Natural killer cell (primary cell): ENCODE measurements at regions of chr9 and their contacts with region 1.

Region 1: DNA sequence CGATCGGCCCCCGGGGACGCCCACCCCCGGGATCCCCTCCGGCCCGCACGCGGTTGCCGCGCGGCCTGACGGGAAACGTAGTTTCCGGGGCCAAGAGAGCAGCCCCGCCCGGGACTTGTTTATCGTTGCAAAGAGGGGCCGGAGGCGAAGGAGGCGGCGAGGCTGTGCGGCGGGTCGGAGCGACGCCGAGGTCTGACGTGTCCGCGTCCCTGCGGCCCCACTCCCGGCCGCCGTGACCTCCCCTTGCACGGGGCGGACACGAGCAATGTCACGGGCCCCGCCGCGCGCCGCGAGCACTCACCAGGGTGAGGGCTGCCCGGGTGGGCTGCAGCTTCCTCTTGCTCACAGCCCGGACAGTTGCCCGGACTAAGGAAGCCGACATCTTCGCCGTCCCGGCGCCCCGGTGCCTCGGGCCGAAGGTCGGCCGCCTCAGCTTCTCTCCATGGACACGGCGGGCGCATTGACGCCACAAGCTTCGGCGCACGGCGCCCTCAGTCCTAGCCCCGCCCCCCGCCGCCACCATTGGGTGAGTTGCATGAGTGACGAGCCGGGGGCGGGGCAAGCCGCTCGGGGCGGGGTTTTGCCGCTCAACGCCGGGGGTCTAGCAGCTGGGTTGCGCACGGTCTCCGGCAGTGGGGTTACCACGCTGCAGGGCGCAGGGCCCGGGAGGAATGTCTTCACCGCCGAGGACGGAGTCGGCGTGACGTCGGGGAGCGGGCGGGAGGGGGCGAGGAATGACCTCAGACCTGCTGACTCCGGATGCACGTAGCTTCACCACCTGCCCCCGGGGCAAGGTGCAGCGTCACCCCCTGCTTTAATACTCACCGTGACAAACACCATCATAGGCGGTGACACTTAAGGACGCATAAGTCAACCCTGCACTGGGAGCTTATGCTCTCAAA is at the start of gene ISCA1:
- DNase-seq: peak; percentile 97 to 99
- ATAC-seq: peak; percentile 83 to 95 (median 84)
- H3K4me3 ChIP-seq: peak within 1 kb of the TSS; percentile 87
- H3K4me3 Mint-ChIP-seq: peak within 1 kb of the TSS; percentile 93
- H3K27ac ChIP-seq: peak within 1 kb of the TSS; percentile 98
- H3K27ac Mint-ChIP-seq: peak within 1 kb of the TSS; percentile 95 to 98
- H3K4me1 ChIP-seq: peaks cover 17% of the 10 kb centered on the region
- H3K4me1 Mint-ChIP-seq: peaks cover 34 to 38% of the 10 kb centered on the region in 2 donors
- H3K27me3 ChIP-seq: no peaks in the 10 kb centered on the region
- H3K27me3 Mint-ChIP-seq: no peaks in the 10 kb centered on the region
- CTCF ChIP-seq: no peak
- total RNA-seq, gene ISCA1: 57.3 to 67.6 (median 63.4) TPM

Region 2: GRCh38 chr9:86202338-86202882 is 79.9 kb before region 1 on chr9:
- intact Hi-C with region 1: loop called (anchors 10 kb)
- DNase-seq: peak in 1 of 2 donors; percentile 64
- ATAC-seq: peak; percentile 65 to 78 (median 72)
- H3K4me3 ChIP-seq: no peak overlapping the region
- H3K4me3 Mint-ChIP-seq: no peak overlapping the region
- H3K27ac ChIP-seq: no peak overlapping the region
- H3K27ac Mint-ChIP-seq: no peak overlapping the region
- H3K4me1 ChIP-seq: no peaks in the 10 kb centered on the region
- H3K4me1 Mint-ChIP-seq: peaks cover 5% of the 10 kb centered on the region in 2 donors
- H3K27me3 ChIP-seq: no peaks in the 10 kb centered on the region
- H3K27me3 Mint-ChIP-seq: peaks cover 7% of the 10 kb centered on the region in 2 donors
- CTCF ChIP-seq: peak; percentile 83

Region 3: DNA sequence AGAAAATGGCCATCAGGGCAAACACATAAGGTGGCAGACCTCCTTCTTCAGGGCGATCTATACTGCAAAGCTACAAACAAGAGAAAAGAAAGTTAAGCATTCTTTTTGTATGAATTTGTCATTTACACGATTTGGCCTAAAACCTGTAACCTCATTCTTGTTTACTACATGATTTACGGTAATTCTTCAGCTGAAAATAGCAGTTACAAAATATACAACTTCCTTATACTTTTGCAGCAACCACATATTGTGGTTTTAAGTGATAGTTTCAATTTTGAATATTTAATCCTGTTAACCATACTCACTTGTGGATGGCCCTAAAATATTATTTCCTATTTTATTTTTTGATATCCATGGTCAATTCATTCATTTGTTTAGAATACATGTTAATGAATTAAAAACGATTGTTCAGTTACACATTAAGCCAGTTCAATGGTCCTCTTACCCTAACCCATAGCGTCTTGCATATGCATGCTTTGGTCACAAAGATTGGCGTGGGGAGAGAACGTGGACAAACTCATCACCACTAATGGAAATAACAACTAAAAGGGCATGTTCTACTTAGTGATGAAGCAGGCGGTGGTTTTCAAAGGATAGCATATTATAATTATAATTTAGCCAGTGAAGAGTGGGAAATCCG is 55.3 kb after region 1 on chr9:
- intact Hi-C with region 1: loop called (anchors 5 kb)
- DNase-seq: peak in 1 of 2 donors; percentile 52
- ATAC-seq: peak; percentile 75 to 90 (median 81)
- H3K4me3 ChIP-seq: peak overlapping the region; percentile 33
- H3K4me3 Mint-ChIP-seq: peak overlapping the region; percentile 88
- H3K27ac ChIP-seq: peak overlapping the region; percentile 90
- H3K27ac Mint-ChIP-seq: peak overlapping the region; percentile 94
- H3K4me1 ChIP-seq: peaks cover 13% of the 10 kb centered on the region
- H3K4me1 Mint-ChIP-seq: peaks cover 31 to 35% of the 10 kb centered on the region in 2 donors
- H3K27me3 ChIP-seq: no peaks in the 10 kb centered on the region
- H3K27me3 Mint-ChIP-seq: no peaks in the 10 kb centered on the region
- CTCF ChIP-seq: no peak

Region 4: DNA sequence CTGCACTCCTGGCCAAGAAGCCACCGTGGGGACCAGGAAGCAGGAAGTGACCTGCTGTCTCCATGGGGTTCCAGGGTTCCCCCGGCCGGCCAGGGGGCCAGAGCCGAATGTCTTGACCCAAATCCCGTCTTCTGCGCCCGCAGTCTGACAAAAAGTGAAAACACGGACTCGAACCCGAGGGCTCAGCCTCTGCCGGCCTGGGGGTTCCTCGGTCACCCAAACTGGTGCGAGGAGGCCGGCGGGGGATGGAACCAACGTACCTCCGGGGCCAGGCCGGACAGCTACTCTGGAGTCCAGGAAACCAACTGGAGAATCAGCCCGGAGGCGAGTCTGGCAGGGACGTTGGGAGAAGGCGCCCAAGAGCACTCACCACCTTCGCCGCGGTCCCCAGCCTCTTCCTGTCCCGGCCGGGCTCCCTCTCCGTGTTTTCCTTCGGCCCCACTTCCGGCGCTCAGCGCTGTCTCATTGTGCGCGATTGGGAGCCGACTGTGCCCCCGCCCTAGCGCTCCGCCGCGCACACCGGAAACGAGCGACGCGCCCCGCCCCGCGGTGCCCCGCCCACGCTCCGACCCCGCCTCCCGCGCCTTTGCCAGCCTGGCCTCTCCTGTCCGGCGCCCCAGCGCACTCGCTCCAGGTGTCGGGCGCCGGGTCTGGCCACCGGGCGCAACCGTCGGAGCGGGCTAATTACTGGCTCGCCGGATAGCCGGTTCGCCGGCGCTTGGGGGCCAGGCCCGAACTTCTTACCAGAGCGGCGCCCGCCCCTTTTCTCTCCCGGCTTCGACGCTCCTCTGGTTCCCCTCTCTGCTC is 71.9 kb after region 1 on chr9 and contains the start of gene TUT7:
- intact Hi-C with region 1: loop called (anchors 1 kb)
- DNase-seq: peak; percentile 96 to 97
- ATAC-seq: peak; percentile 92 to 99 (median 96)
- H3K4me3 ChIP-seq: peak within 1 kb of the TSS; percentile 72
- H3K4me3 Mint-ChIP-seq: peak within 1 kb of the TSS; percentile 95
- H3K27ac ChIP-seq: peak within 1 kb of the TSS; percentile 82
- H3K27ac Mint-ChIP-seq: peak within 1 kb of the TSS; percentile 93 to 97
- H3K4me1 ChIP-seq: peaks cover 19% of the 10 kb centered on the region
- H3K4me1 Mint-ChIP-seq: peaks cover 40 to 45% of the 10 kb centered on the region in 2 donors
- H3K27me3 ChIP-seq: no peaks in the 10 kb centered on the region
- H3K27me3 Mint-ChIP-seq: no peaks in the 10 kb centered on the region
- CTCF ChIP-seq: no peak
- total RNA-seq, gene TUT7: 84.7 to 94.8 (median 85.6) TPM

Region 5: DNA sequence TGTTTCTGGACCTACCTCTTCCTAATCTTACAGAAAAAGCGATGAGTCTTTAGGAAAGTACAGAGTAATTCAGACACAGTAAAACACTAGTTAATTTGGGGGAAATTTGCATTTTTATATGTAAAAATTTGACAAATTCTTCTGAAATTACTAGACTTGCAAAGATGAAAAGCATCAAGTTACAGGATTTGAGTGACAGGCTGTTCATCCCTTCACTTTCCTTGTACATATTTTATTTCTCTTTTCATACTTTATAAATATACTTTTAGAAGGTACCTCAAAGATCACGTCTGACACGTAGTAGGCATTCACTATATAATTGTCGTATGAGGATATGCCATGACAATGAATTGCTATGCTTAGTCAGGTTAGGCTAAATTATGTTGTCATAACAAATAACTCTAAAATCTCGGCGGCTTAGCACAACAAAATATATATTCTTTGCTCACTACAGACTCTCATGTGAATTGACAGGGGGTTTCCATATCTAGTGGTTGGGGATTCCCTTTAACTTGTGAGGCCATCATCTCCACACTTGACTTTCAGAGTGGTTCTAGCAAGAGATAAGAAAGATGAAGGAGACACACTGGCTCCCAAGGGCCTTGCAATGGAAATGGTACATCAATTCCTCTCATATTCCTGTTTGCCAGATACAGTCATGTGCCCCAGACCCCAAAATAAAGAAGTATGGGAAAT is 226.0 kb after region 1 on chr9:
- intact Hi-C with region 1: no loop called
- DNase-seq: no peak
- ATAC-seq: no peak
- H3K4me3 ChIP-seq: no peak overlapping the region
- H3K4me3 Mint-ChIP-seq: no peak overlapping the region
- H3K27ac ChIP-seq: no peak overlapping the region
- H3K27ac Mint-ChIP-seq: no peak overlapping the region
- H3K4me1 ChIP-seq: no peaks in the 10 kb centered on the region
- H3K4me1 Mint-ChIP-seq: no peaks in the 10 kb centered on the region
- H3K27me3 ChIP-seq: no peaks in the 10 kb centered on the region
- H3K27me3 Mint-ChIP-seq: peaks cover 5 to 23% of the 10 kb centered on the region in 2 donors
- CTCF ChIP-seq: no peak